H1 (cell line): ENCODE measurements at regions of chr10 and their contacts with region 1.

Region 1: GRCh38 chr10:100878291-100878910 is 34.4 kb upstream of the SLF2 start:
- DNase-seq: peak; percentile 31 to 71
- H3K4me3 ChIP-seq: no peak overlapping the region
- H3K27ac ChIP-seq: no peak overlapping the region
- H3K4me1 ChIP-seq: peaks cover 0 to 12% (median 7%) of the 10 kb centered on the region in 4 experiments; a peak in 5 of 7 replicates
- H3K27me3 ChIP-seq: peaks cover 0 to 13% (median 6%) of the 10 kb centered on the region in 4 experiments; a peak in 4 of 7 replicates
- CTCF ChIP-seq: peak; percentile 66 to 90 (median 85)
- EP300 ChIP-seq: no peak
- POLR2A ChIP-seq: no peak
- RAD21 ChIP-seq: peak; percentile 97 to 98

Region 2: DNA sequence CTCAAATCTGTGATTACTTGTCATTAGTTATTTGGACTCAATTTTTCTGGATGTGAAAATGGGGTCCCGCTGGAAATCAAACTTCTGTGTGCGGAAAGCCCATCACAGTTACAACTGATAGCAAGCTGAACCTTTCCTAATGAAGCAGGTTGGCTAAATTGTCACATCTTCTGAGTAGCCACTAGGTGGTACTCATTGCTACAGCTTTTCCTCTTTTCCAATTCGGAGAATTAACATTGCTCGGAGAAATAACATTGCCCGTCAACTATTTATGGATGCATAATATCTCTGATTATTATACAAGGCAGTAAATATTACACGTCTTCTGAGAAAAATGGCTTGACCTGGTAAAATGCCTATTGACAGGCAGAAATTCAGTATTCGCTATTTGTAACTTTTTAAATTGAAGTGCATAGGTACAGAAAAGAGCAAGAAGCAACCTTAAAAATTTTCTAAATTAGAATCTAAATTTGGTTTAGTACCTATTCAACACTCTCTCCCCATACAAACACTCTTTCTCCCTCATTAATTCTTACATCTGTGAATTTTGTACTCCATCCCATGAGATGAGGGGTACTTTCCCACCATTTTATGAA is 574.6 kb before region 1 on chr10:
- CTCF ChIA-PET with region 1: no interaction called
- POLR2A ChIA-PET with region 1: no interaction called
- DNase-seq: no peak
- H3K4me3 ChIP-seq: no peak overlapping the region
- H3K27ac ChIP-seq: no peak overlapping the region
- H3K4me1 ChIP-seq: peaks cover 0 to 11% (median 2%) of the 10 kb centered on the region in 4 experiments; a peak in 4 of 7 replicates
- H3K27me3 ChIP-seq: no peaks in the 10 kb centered on the region
- CTCF ChIP-seq: peak in 2 of 3 experiments; percentile 58 to 81; a peak in 3 of 4 replicates
- EP300 ChIP-seq: no peak
- POLR2A ChIP-seq: no peak
- RAD21 ChIP-seq: peak; percentile 73 to 77

Region 3: GRCh38 chr10:100637785-100638184 is 240.6 kb before region 1 on chr10:
- CTCF ChIA-PET with region 1: interaction called, 11 read pairs
- POLR2A ChIA-PET with region 1: no interaction called
- DNase-seq: peak; percentile 29 to 87
- H3K4me3 ChIP-seq: no peak overlapping the region; a peak in 1 of 8 replicates
- H3K27ac ChIP-seq: no peak overlapping the region
- H3K4me1 ChIP-seq: peaks cover 8 to 19% (median 12%) of the 10 kb centered on the region in 4 experiments
- H3K27me3 ChIP-seq: peaks cover 0 to 6% (median 2%) of the 10 kb centered on the region in 4 experiments; a peak in 1 of 7 replicates
- CTCF ChIP-seq: peak; percentile 95 to 98 (median 97)
- EP300 ChIP-seq: no peak
- POLR2A ChIP-seq: no peak
- RAD21 ChIP-seq: peak; percentile 60 to 77

Region 4: GRCh38 chr10:100749309-100750217 is 128.8 kb before region 1 on chr10:
- CTCF ChIA-PET with region 1: interaction called, 57 read pairs
- POLR2A ChIA-PET with region 1: no interaction called
- DNase-seq: peak in 1 of 2 experiments; percentile 55
- H3K4me3 ChIP-seq: no peak overlapping the region
- H3K27ac ChIP-seq: no peak overlapping the region
- H3K4me1 ChIP-seq: peaks cover 0 to 14% (median 7%) of the 10 kb centered on the region in 4 experiments; a peak in 6 of 7 replicates
- H3K27me3 ChIP-seq: peaks cover 83 to 94% (median 92%) of the 10 kb centered on the region in 4 experiments
- CTCF ChIP-seq: no peak
- EP300 ChIP-seq: no peak
- POLR2A ChIP-seq: no peak
- RAD21 ChIP-seq: no peak

Region 5: DNA sequence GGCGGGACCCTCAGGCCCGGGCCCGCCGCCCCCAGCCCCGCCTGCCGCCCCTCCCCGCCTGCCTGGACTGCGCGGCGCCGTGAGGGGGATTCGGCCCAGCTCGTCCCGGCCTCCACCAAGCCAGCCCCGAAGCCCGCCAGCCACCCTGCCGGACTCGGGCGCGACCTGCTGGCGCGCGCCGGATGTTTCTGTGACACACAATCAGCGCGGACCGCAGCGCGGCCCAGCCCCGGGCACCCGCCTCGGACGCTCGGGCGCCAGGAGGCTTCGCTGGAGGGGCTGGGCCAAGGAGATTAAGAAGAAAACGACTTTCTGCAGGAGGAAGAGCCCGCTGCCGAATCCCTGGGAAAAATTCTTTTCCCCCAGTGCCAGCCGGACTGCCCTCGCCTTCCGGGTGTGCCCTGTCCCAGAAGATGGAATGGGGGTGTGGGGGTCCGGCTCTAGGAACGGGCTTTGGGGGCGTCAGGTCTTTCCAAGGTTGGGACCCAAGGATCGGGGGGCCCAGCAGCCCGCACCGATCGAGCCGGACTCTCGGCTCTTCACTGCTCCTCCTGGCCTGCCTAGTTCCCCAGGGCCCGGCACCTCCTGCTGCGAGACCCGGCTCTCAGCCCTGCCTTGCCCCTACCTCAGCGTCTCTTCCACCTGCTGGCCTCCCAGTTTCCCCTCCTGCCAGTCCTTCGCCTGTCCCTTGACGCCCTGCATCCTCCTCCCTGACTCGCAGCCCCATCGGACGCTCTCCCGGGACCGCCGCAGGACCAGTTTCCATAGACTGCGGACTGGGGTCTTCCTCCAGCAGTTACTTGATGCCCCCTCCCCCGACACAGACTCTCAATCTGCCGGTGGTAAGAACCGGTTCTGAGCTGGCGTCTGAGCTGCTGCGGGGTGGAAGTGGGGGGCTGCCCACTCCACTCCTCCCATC is 50.3 kb before region 1 on chr10:
- CTCF ChIA-PET with region 1: interaction called, 74 read pairs
- POLR2A ChIA-PET with region 1: no interaction called
- DNase-seq: peak in 1 of 2 experiments; percentile 74
- H3K4me3 ChIP-seq: peak overlapping the region in 3 of 4 experiments; percentile 26 to 53 (median 28); a peak in 5 of 8 replicates
- H3K27ac ChIP-seq: no peak overlapping the region
- H3K4me1 ChIP-seq: peaks cover 4 to 26% (median 20%) of the 10 kb centered on the region in 4 experiments
- H3K27me3 ChIP-seq: peaks cover 96 to 100% (median 100%) of the 10 kb centered on the region in 4 experiments
- CTCF ChIP-seq: peak in 1 of 3 experiments; percentile 42; a peak in 2 of 4 replicates
- EP300 ChIP-seq: no peak
- POLR2A ChIP-seq: no peak
- RAD21 ChIP-seq: peak; percentile 12 to 52; a peak in 3 of 4 replicates

Region 6: GRCh38 chr10:100864978-100865377 is 13.4 kb before region 1 on chr10:
- CTCF ChIA-PET with region 1: interaction called, 42 read pairs
- POLR2A ChIA-PET with region 1: no interaction called
- DNase-seq: no peak
- H3K4me3 ChIP-seq: no peak overlapping the region
- H3K27ac ChIP-seq: no peak overlapping the region
- H3K4me1 ChIP-seq: peaks cover 0 to 8% (median 4%) of the 10 kb centered on the region in 4 experiments; a peak in 5 of 7 replicates
- H3K27me3 ChIP-seq: peaks cover 1 to 44% (median 33%) of the 10 kb centered on the region in 4 experiments
- CTCF ChIP-seq: no peak
- EP300 ChIP-seq: no peak
- POLR2A ChIP-seq: no peak
- RAD21 ChIP-seq: no peak

Region 7: DNA sequence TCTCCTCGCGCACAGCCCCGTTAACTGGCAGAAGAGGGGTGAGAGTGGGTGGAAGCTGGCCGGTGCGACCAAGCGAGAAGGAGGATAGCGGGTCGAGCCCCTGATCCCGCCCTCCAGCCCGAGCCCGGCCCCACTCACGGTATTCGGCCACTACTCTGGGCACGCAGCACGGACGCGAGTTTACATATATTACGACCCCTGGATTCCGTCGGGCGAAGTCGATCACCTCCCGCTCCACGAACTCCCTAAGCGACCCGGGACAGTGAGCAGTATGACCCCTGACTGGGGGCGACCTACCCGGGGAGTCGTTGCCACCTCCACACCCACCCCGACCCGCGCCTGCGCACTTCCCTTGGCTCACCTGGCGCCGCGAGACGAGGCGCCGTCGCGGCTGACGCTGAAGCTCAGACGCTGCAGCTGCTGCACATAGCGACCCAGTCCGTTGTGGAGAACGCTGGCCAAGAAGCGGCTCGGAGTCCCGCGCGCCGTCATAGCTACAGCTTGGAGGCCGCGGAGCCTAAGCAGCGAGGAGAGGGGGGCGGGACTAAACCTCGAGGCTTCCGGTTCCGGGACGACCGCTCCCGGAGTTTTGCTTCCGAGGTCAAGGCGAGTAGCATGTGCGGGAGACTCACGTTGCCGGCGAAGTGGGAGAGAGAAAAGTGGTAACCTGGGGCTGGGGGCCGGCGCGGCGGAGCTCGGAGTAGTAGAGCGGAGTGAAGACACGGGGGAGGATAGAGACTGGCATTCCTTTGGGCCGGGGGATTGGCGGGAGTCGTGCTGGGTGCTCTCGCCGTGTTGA is 108.8 kb after region 1 on chr10 and contains the starts of genes MRPL43 and TWNK:
- CTCF ChIA-PET with region 1: no interaction called
- POLR2A ChIA-PET with region 1: no interaction called
- DNase-seq: peak in 1 of 2 experiments; percentile 92
- H3K4me3 ChIP-seq: peak within 1 kb of the TSS; percentile 68 to 92 (median 80)
- H3K27ac ChIP-seq: peak within 1 kb of the TSS; percentile 37
- H3K4me1 ChIP-seq: peaks cover 0 to 12% (median 5%) of the 10 kb centered on the region in 4 experiments; a peak in 4 of 7 replicates
- H3K27me3 ChIP-seq: no peaks in the 10 kb centered on the region
- CTCF ChIP-seq: no peak
- EP300 ChIP-seq: no peak
- POLR2A ChIP-seq: peak; percentile 36 to 63; a peak in 2 of 3 replicates
- RAD21 ChIP-seq: no peak
- total RNA-seq, gene MRPL43: 74.1 and 80.9 TPM in 2 replicates
- total RNA-seq, gene TWNK: 32.5 and 34.9 TPM in 2 replicates

Region 8: GRCh38 chr10:101042667-101043355 is 164.4 kb after region 1 on chr10:
- CTCF ChIA-PET with region 1: no interaction called
- POLR2A ChIA-PET with region 1: no interaction called
- DNase-seq: peak; percentile 90 to 97
- H3K4me3 ChIP-seq: peak overlapping the region; percentile 65 to 82 (median 73)
- H3K27ac ChIP-seq: no peak overlapping the region
- H3K4me1 ChIP-seq: peaks cover 3 to 24% (median 13%) of the 10 kb centered on the region in 4 experiments
- H3K27me3 ChIP-seq: peaks cover 20 to 42% (median 36%) of the 10 kb centered on the region in 4 experiments
- CTCF ChIP-seq: no peak
- EP300 ChIP-seq: no peak
- POLR2A ChIP-seq: no peak
- RAD21 ChIP-seq: no peak

Region 9: DNA sequence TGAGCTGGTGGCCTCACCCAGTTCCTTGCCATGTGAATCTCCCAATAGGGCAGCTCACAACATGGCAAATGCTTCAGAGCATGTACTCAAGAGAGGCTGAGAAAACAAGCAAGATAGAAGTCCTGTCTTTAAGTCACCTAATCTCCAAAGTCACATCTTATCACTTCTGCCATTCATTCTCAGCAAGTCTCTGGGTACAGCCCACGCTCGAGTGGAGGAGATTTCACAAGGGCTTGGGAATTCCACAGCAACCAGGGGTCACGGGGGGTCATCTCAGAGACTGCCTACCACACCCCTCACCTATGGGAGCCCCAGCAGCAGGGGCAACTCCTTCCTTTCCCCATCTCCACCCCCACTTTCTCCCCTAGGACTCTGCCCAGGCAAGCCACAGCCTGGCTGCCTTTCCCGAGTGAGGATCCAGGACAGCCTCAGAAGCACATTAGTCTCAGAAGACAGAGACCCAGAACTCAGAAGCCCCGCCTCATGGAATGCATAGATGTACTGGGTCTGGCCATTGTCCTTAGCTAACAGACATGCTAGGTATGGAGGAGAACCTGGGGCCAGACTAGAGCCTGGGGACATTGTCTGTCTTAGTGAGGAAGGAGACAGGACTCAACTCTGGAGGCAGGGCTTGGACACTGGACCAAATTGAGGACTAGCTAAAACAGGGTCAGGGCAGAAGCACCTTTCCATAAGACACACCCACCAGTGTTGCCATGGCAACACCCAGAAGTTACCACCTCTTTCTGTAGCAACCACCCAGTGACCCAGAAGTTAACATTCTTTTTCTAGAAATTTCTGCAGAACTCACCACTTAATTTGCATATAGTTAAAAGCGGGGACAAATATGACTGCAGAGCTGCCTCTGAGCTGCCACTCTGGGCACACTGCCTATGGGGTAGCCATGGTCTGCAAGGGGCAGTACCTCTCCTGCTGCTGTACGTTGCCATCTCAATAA is 280.0 kb after region 1 on chr10:
- CTCF ChIA-PET with region 1: no interaction called
- POLR2A ChIA-PET with region 1: no interaction called
- DNase-seq: no peak
- H3K4me3 ChIP-seq: no peak overlapping the region
- H3K27ac ChIP-seq: no peak overlapping the region
- H3K4me1 ChIP-seq: 0 out of 7 replicates have a peak, but pooled peaks cover 0 to 7% (median 0%) of the 10 kb centered on the region in 4 experiments
- H3K27me3 ChIP-seq: peaks cover 2 to 15% (median 13%) of the 10 kb centered on the region in 4 experiments; a peak in 6 of 7 replicates
- CTCF ChIP-seq: no peak
- EP300 ChIP-seq: no peak
- POLR2A ChIP-seq: no peak
- RAD21 ChIP-seq: no peak